ENCODE measurements at regions of chr12 and their contacts with region 1.

Region 1: GRCh38 chr12:9951026-9951675 is 19.0 kb upstream of the CLEC2A start:
- DNase-seq: no peak
- ATAC-seq: no peak
- H3K4me3 ChIP-seq: peak overlapping the region in 1 of 10 donors; percentile 5
- H3K27ac ChIP-seq: peak overlapping the region in 1 of 10 donors; percentile 56
- H3K4me1 ChIP-seq: peaks cover 0 to 32% (median 0%) of the 10 kb centered on the region in 9 donors
- H3K27me3 ChIP-seq: no peaks in the 10 kb centered on the region
- CTCF ChIP-seq: no peak

Region 2: DNA sequence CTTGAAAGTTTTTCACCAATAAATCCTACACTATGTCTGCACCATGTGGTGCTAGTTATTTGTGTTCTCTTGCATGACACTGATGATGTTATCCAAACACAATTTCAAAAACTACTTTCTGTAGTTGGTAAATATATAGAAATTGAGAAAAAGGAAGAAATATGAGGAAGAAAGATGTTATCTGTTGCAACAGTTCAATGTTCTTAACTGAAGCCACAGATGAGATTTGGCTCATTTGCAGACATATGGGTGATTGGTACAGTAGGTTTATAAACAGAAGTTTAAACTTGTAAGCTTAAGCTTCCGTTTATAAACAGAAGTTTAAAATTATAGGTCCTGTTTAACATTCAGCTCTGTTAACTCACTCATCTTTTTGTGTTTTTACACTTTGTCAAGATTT is 20.0 kb after region 1 on chr12 and contains the start of gene CLEC12A:
- intact Hi-C with region 1: loop called in 1 of 10 experiments (anchors 2 kb)
- DNase-seq: no peak
- ATAC-seq: no peak
- H3K4me3 ChIP-seq: peak within 1 kb of the TSS in 1 of 10 donors; percentile 48
- H3K27ac ChIP-seq: peak within 1 kb of the TSS in 1 of 10 donors; percentile 81
- H3K4me1 ChIP-seq: peaks cover 0 to 13% (median 0%) of the 10 kb centered on the region in 9 donors
- H3K27me3 ChIP-seq: no peaks in the 10 kb centered on the region
- CTCF ChIP-seq: no peak
- total RNA-seq, gene CLEC12A: 0.20 to 8.9 (median 0.85) TPM in 9 of 10 donors, not detected in the other